ENCODE measurements at regions of chr21 and their contacts with region 1.

Region 1: GRCh38 chr21:36989699-36990507 is 16.6 kb upstream of the RIPPLY3 start:
- DNase-seq: peak; percentile 91 to 96
- H3K4me3 ChIP-seq: peak overlapping the region; percentile 54 to 81
- H3K27ac ChIP-seq: peak overlapping the region; percentile 87
- H3K4me1 ChIP-seq: peaks cover 0 to 7% (median 3%) of the 10 kb centered on the region in 4 donors
- H3K27me3 ChIP-seq: peaks cover 0 to 14% of the 10 kb centered on the region in 2 donors
- CTCF ChIP-seq: peak; percentile 73 to 89

Region 2: DNA sequence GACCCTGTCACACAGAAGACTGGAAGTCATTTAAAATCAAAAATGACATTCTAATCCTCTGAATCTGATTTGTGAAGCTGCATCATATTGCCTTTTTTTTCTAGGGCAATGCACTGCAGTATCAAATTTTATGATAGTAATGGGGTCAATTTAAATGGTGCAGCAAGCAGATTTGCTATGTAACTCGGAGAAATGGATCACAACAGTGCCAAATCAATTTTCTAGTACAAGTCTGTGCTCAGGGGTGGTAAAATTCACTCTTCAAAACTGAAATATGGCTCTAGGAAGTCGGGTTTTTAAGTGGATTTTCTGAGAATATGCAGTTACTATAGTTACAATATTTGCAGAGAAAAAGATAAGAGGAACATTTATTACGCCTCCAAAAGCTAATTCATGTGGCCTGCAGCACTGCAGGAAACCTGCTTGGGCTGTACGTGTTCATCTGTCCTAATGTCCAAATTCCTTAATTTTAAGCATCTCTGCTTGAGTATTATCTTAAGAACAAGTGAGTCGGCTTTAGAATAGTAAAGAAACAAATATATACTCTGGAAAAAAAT is 55.0 kb before region 1 on chr21:
- intact Hi-C with region 1: loop called (anchors 5 kb)
- DNase-seq: no peak
- H3K4me3 ChIP-seq: no peak overlapping the region
- H3K27ac ChIP-seq: no peak overlapping the region
- H3K4me1 ChIP-seq: peaks cover 0 to 22% (median 9%) of the 10 kb centered on the region in 4 donors
- H3K27me3 ChIP-seq: no peaks in the 10 kb centered on the region
- CTCF ChIP-seq: no peak

Region 3: DNA sequence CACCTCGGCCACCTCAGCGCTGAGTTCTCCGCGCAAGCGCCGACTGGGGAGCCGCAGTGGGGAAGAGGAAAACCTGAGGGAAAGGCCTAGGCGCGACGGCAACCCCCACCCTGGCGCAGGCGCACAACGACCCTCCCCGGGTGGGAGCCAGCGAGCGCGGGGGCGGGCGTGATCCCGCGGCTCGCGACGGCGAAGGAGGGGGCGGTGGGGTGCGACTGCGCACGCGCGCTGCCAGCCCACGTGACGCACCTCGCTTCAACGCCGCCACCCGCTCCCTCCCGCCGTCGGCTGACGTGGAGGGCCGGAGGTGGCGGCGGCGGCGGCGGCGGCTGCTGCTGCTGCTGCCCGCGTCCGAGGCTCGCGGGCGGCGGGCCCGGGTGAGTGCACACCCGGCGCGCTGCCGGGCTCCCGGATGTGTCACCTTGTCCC is 83.1 kb after region 1 on chr21 and contains the starts of genes PIGP and TTC3:
- intact Hi-C with region 1: loop called (anchors 10 kb)
- DNase-seq: peak; percentile 89 to 96
- H3K4me3 ChIP-seq: peak within 1 kb of the TSS; percentile 69 to 71
- H3K27ac ChIP-seq: peak within 1 kb of the TSS; percentile 97 to 99
- H3K4me1 ChIP-seq: peaks cover 0 to 24% (median 14%) of the 10 kb centered on the region in 4 donors
- H3K27me3 ChIP-seq: no peaks in the 10 kb centered on the region
- CTCF ChIP-seq: no peak

Measured in tibial artery (tissue), 4 donors.